ENCODE measurements at regions of chr19 and their contacts with region 1.

Region 1: GRCh38 chr19:56314562-56315077 is at the start of gene ZSCAN5A:
- DNase-seq: peak; percentile 66 to 95
- H3K4me3 ChIP-seq: peak within 1 kb of the TSS; percentile 71 to 99 (median 90)
- H3K27ac ChIP-seq: peak within 1 kb of the TSS; percentile 98
- H3K4me1 ChIP-seq: peaks cover 0 to 3% (median 1%) of the 10 kb centered on the region in 4 experiments; a peak in 2 of 7 replicates
- H3K27me3 ChIP-seq: no peaks in the 10 kb centered on the region
- CTCF ChIP-seq: peak in 1 of 3 experiments; percentile 11; a peak in 1 of 4 replicates
- EP300 ChIP-seq: no peak
- POLR2A ChIP-seq: peak in 1 of 2 experiments; percentile 82; a peak in 2 of 3 replicates
- RAD21 ChIP-seq: no peak
- total RNA-seq, gene ZSCAN5A: 11.0 and 15.0 TPM in 2 replicates

Region 2: GRCh38 chr19:56273563-56274117 is 41.0 kb before region 1 on chr19:
- CTCF ChIA-PET with region 1: interaction called, 11 read pairs
- POLR2A ChIA-PET with region 1: interaction called, 3 read pairs
- DNase-seq: no peak
- H3K4me3 ChIP-seq: no peak overlapping the region
- H3K27ac ChIP-seq: no peak overlapping the region
- H3K4me1 ChIP-seq: no peaks in the 10 kb centered on the region
- H3K27me3 ChIP-seq: no peaks in the 10 kb centered on the region
- CTCF ChIP-seq: no peak
- EP300 ChIP-seq: no peak
- POLR2A ChIP-seq: no peak
- RAD21 ChIP-seq: no peak

Region 3: GRCh38 chr19:56291867-56292266 is 22.8 kb before region 1 on chr19:
- CTCF ChIA-PET with region 1: interaction called, 16 read pairs
- POLR2A ChIA-PET with region 1: no interaction called
- DNase-seq: no peak
- H3K4me3 ChIP-seq: no peak overlapping the region
- H3K27ac ChIP-seq: no peak overlapping the region
- H3K4me1 ChIP-seq: no peaks in the 10 kb centered on the region; a peak in 1 of 7 replicates
- H3K27me3 ChIP-seq: no peaks in the 10 kb centered on the region
- CTCF ChIP-seq: no peak
- EP300 ChIP-seq: no peak
- POLR2A ChIP-seq: no peak
- RAD21 ChIP-seq: no peak

Region 4: DNA sequence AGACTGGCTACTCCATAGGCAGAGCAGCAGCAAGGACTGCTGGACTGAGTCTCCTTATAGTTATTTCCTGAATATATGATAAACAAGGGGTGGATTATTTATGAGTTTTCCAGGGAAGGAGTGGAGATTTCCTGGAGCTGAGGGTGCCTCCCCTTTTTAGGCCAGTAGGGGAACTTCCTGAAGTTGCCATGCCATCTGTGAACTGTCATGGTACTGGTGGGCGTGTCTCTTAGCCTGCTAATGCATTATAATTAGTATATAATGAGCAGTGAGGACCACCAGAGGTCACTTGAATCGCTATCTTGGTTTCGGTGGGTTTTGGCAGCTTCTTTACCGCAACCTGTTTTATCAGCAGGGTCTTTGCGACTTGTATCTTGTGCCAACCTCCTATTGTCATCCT is 13.4 kb before region 1 on chr19:
- CTCF ChIA-PET with region 1: interaction called, 23 read pairs
- POLR2A ChIA-PET with region 1: no interaction called
- DNase-seq: no peak
- H3K4me3 ChIP-seq: no peak overlapping the region
- H3K27ac ChIP-seq: no peak overlapping the region
- H3K4me1 ChIP-seq: no peaks in the 10 kb centered on the region
- H3K27me3 ChIP-seq: no peaks in the 10 kb centered on the region
- CTCF ChIP-seq: peak in 1 of 3 experiments; percentile 31; a peak in 1 of 4 replicates
- EP300 ChIP-seq: no peak
- POLR2A ChIP-seq: no peak
- RAD21 ChIP-seq: no peak

Region 5: DNA sequence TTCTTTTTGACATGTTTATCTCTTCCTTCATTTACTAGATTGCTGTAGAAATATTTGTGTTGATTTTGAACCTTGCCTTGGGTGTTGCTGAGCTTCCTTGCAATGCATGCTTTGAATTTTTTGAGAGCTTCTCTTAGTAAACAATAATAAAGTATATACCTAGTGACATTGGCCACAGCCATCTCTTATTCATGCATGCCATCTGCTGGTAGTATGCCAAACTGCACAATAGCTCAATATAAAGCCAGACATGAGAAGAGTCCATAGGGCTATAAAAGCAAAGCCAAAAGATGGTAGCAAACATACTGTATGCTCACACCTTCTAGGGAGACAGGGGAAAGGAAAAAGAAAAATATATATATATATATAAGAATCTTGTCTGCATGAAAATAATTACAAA is 18.9 kb after region 1 on chr19:
- CTCF ChIA-PET with region 1: interaction called, 13 read pairs
- POLR2A ChIA-PET with region 1: no interaction called
- DNase-seq: peak in 1 of 2 experiments; percentile 49
- H3K4me3 ChIP-seq: no peak overlapping the region
- H3K27ac ChIP-seq: no peak overlapping the region
- H3K4me1 ChIP-seq: no peaks in the 10 kb centered on the region
- H3K27me3 ChIP-seq: no peaks in the 10 kb centered on the region
- CTCF ChIP-seq: peak in 2 of 3 experiments; percentile 59 to 61; a peak in 3 of 4 replicates
- EP300 ChIP-seq: no peak
- POLR2A ChIP-seq: no peak
- RAD21 ChIP-seq: peak; percentile 81